ENCODE measurements at regions of chr18 and their contacts with region 1.

Region 1: DNA sequence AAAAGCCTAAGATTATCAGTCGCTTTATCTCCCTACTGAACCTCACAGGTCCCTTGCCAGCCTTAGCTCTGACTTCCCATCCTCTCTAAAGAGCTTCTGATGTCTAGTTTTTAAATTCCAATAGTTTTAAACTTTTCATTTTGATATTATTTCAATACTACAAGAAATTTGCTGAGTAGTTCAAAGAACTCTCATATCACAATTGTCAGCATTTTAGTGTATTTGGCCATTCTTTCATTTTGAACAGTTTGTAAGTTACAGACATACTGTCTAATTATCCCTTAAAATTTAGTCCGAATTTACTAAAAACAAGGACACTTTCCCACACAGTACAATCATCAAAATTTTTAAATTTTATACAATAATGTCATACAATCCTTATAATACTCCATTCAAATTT is 666.8 kb upstream of the SETBP1 start:
- DNase-seq: no peak
- ATAC-seq: no peak
- H3K4me3 Mint-ChIP-seq: no peak overlapping the region
- H3K27ac Mint-ChIP-seq: no peak overlapping the region
- H3K4me1 Mint-ChIP-seq: no peaks in the 10 kb centered on the region
- H3K27me3 Mint-ChIP-seq: no peaks in the 10 kb centered on the region
- CTCF ChIP-seq: no peak

Region 2: GRCh38 chr18:43827311-43827710 is 186.6 kb before region 1 on chr18:
- CTCF ChIA-PET with region 1: no interaction called
- POLR2A ChIA-PET with region 1: no interaction called
- intact Hi-C with region 1: no loop called
- DNase-seq: no peak
- ATAC-seq: no peak
- H3K4me3 Mint-ChIP-seq: no peak overlapping the region
- H3K27ac Mint-ChIP-seq: no peak overlapping the region
- H3K4me1 Mint-ChIP-seq: no peaks in the 10 kb centered on the region
- H3K27me3 Mint-ChIP-seq: no peaks in the 10 kb centered on the region
- CTCF ChIP-seq: no peak

Region 3: GRCh38 chr18:44937960-44938719 is 924.3 kb after region 1 on chr18:
- CTCF ChIA-PET with region 1: no interaction called
- POLR2A ChIA-PET with region 1: no interaction called
- intact Hi-C with region 1: loop called (anchors 10 kb)
- DNase-seq: no peak
- ATAC-seq: no peak
- H3K4me3 Mint-ChIP-seq: no peak overlapping the region
- H3K27ac Mint-ChIP-seq: no peak overlapping the region
- H3K4me1 Mint-ChIP-seq: no peaks in the 10 kb centered on the region
- H3K27me3 Mint-ChIP-seq: peaks cover 3% of the 10 kb centered on the region
- CTCF ChIP-seq: no peak